MCF 10A (cell line): ENCODE measurements at regions of chr9 and their contacts with region 1.

Region 1: GRCh38 chr9:74742792-74743730 is 144.7 kb downstream of the TRPM6 start:
- DNase-seq: peak; percentile 41
- H3K4me3 Mint-ChIP-seq: no peak overlapping the region
- H3K27ac Mint-ChIP-seq: no peak overlapping the region
- H3K4me1 Mint-ChIP-seq: peaks cover 5% of the 10 kb centered on the region
- H3K27me3 Mint-ChIP-seq: peaks cover 64% of the 10 kb centered on the region
- CTCF ChIP-seq: peak; percentile 81

Region 2: DNA sequence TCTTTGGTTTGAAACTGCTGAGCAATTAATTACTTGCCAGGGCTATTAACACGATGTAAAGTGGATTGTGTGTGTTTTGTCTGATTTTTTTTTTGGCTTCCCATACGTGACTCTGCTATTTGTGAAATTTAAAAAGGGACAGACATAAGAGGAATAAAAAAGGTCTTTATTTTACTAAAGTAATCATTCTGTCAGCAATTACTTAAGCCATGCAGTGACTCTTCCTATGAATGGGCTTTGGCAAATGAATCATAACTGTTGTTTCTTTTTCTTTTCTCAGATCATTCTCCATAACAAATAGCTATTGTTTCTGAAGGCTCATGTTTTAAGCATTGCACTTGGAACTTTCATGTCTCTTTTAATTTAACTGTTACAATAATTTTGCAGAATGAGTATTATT is 707.3 kb before region 1 on chr9:
- CTCF ChIA-PET with region 1: no interaction called
- POLR2A ChIA-PET with region 1: no interaction called
- intact Hi-C with region 1: no loop called
- DNase-seq: no peak
- H3K4me3 Mint-ChIP-seq: no peak overlapping the region
- H3K27ac Mint-ChIP-seq: no peak overlapping the region
- H3K4me1 Mint-ChIP-seq: no peaks in the 10 kb centered on the region
- H3K27me3 Mint-ChIP-seq: peaks cover 26% of the 10 kb centered on the region
- CTCF ChIP-seq: no peak

Region 3: GRCh38 chr9:74577956-74578355 is 165.1 kb before region 1 on chr9:
- CTCF ChIA-PET with region 1: no interaction called
- POLR2A ChIA-PET with region 1: no interaction called
- intact Hi-C with region 1: loop called (anchors 2 kb)
- DNase-seq: no peak
- H3K4me3 Mint-ChIP-seq: no peak overlapping the region
- H3K27ac Mint-ChIP-seq: no peak overlapping the region
- H3K4me1 Mint-ChIP-seq: no peaks in the 10 kb centered on the region
- H3K27me3 Mint-ChIP-seq: peaks cover 92% of the 10 kb centered on the region
- CTCF ChIP-seq: no peak

Region 4: DNA sequence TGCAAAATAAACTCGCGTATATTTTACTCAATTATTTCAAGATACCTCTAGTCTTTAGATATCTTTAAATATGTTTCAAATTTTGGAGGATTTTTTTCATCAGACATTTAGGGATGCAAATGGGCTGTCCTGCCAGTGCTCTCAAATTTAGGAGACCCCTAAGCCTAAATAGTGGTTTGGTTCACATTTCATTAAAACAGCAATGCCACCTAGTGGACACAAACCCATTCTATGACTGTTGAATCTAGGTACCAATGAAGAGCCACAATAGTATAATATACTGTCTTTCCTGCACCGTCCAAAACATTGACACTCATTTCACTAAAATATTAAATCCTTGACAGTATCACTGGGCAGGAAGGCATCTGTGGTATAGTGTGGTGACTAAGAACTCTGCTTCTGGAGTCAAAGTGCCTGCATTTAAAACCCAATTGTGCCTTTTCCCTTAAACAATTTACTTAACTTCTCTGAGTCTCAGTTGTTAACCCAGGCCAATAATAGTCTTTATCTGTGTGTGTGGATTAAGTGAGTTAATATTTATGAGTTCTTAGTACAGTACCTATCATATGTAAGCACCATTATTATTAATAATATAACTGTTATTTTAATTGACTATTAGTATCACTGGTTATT is 97.9 kb before region 1 on chr9:
- CTCF ChIA-PET with region 1: interaction called, 3 read pairs
- POLR2A ChIA-PET with region 1: no interaction called
- intact Hi-C with region 1: loop called (anchors 2 kb)
- DNase-seq: peak; percentile 33
- H3K4me3 Mint-ChIP-seq: no peak overlapping the region
- H3K27ac Mint-ChIP-seq: no peak overlapping the region
- H3K4me1 Mint-ChIP-seq: no peaks in the 10 kb centered on the region
- H3K27me3 Mint-ChIP-seq: peaks cover 83% of the 10 kb centered on the region
- CTCF ChIP-seq: peak; percentile 64

Region 5: DNA sequence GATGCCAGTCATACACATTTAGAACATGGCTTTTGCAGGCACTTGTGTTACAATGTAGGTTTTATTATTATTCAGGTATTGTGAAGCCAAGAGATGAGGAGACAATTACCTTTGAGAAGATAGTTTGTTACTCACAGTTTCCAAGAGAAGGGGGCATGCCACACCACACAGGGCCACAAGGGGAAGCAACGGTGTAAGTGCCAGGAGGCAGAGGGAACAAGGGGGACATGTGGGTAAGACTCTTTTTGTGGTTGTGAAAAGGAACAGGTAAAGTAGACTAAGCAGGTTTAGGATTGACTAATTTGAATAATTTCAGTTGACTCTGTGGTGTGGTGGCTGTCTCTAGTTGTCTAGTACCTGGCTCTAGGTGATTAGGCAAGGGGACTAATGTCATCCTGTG is 46.5 kb before region 1 on chr9:
- CTCF ChIA-PET with region 1: no interaction called
- POLR2A ChIA-PET with region 1: no interaction called
- intact Hi-C with region 1: no loop called
- DNase-seq: no peak
- H3K4me3 Mint-ChIP-seq: no peak overlapping the region
- H3K27ac Mint-ChIP-seq: no peak overlapping the region
- H3K4me1 Mint-ChIP-seq: no peaks in the 10 kb centered on the region
- H3K27me3 Mint-ChIP-seq: peaks cover 77% of the 10 kb centered on the region
- CTCF ChIP-seq: no peak

Region 6: DNA sequence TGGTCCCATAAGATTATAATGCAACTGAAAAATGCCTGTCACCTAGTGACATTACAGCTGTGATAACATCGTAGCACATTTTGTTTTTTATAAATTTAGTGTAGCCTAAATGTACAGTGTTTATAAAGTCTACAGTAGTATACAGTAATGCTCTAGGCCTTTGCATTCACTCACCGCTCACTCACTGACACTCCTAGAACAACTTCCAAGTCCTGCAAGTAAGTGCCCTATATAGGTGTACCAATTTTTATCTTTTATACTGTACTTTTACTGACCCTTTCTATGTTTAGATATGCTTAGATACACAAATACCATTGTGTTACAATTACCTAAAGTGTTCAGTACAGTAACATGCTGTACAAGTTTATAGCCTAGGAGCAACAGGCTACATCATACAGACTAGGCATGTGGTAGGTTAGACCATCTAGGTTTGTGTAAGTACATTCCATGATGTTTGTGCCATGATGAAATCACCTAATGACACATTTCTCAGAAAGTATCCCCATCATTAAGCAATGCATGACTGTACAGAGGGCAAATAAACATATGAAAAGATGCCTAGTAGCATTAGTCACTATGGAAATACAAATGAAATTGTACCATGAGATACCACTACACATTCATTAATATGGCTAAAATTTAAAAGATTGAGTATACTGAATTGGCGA is 17.1 kb after region 1 on chr9:
- CTCF ChIA-PET with region 1: interaction called, 11 read pairs
- POLR2A ChIA-PET with region 1: no interaction called
- intact Hi-C with region 1: no loop called
- DNase-seq: peak; percentile 92
- H3K4me3 Mint-ChIP-seq: no peak overlapping the region
- H3K27ac Mint-ChIP-seq: peak overlapping the region; percentile 69
- H3K4me1 Mint-ChIP-seq: peaks cover 12% of the 10 kb centered on the region
- H3K27me3 Mint-ChIP-seq: no peaks in the 10 kb centered on the region
- CTCF ChIP-seq: no peak

Region 7: GRCh38 chr9:75552941-75553340 is 809.9 kb after region 1 on chr9:
- CTCF ChIA-PET with region 1: no interaction called
- POLR2A ChIA-PET with region 1: no interaction called
- intact Hi-C with region 1: no loop called
- DNase-seq: no peak
- H3K4me3 Mint-ChIP-seq: no peak overlapping the region
- H3K27ac Mint-ChIP-seq: no peak overlapping the region
- H3K4me1 Mint-ChIP-seq: no peaks in the 10 kb centered on the region
- H3K27me3 Mint-ChIP-seq: no peaks in the 10 kb centered on the region
- CTCF ChIP-seq: no peak